Heart left ventricle (tissue), 16 donors: ENCODE measurements at regions of chr20 and their contacts with region 1.

Region 1: DNA sequence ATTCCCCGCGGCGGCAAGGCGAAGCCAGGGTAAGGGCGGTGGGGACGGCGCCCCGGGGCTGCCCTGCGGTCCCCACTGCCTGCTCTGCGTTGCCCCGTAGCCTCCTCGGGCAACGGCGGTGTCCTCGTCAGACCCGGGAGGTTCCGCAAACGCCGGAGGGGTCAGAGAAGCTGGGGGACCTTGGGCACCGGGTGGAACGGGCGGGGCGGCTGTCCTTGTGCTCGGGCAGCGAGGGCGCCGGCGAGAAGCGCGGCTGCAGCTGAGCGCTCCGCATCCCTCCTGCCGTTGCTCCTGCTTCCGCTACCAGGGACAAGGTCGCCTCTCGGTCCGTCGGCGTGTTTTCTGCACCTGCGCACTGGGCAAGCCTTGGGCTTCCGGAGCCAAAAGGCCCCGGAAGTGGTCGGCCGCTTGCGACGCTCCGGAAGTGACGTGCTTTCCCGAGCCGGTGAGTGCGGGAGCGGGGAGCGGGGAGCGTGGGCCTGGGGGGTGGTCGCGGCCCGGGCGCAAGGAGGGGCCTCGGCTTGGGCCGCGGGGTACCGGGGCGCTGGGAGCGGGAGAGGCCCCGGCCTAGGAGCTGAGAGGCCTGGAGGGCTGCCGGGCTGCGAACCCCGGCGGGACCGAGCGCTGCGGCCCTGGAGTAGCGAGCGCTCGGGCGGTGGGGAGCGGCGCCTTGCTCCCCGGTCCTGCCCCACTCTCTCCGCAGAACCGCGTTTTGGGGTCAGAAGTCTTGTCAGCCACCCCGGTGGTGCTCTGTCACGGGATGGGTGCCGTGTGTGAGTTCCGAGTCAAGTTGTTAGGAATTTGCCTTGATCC is at the start of gene MTG2:
- DNase-seq: peak; percentile 95 to 98 (median 97)
- ATAC-seq: peak; percentile 94 to 98 (median 98)
- H3K4me3 ChIP-seq: peak within 1 kb of the TSS; percentile 77 to 99 (median 96)
- H3K27ac ChIP-seq: peak within 1 kb of the TSS; percentile 78 to 99 (median 93)
- H3K4me1 ChIP-seq: peaks cover 8 to 35% (median 27%) of the 10 kb centered on the region in 12 donors
- H3K27me3 ChIP-seq: no peaks in the 10 kb centered on the region
- CTCF ChIP-seq: peak in 3 of 12 donors; percentile 4 to 14 (median 7)
- POLR2A ChIP-seq: peak in 1 of 2 donors; percentile 93
- total RNA-seq, gene MTG2: 20.7 to 36.8 (median 26.5) TPM

Region 2: GRCh38 chr20:62149532-62150309 is 33.1 kb before region 1 on chr20:
- intact Hi-C with region 1: loop called in 1 of 10 experiments (anchors 5 kb)
- DNase-seq: no peak
- ATAC-seq: peak in 1 of 4 donors; percentile 19
- H3K4me3 ChIP-seq: no peak overlapping the region
- H3K27ac ChIP-seq: peak overlapping the region in 1 of 12 donors; percentile 31
- H3K4me1 ChIP-seq: peaks cover 0 to 41% (median 21%) of the 10 kb centered on the region in 12 donors
- H3K27me3 ChIP-seq: no peaks in the 10 kb centered on the region
- CTCF ChIP-seq: no peak
- POLR2A ChIP-seq: no peak

Region 3: DNA sequence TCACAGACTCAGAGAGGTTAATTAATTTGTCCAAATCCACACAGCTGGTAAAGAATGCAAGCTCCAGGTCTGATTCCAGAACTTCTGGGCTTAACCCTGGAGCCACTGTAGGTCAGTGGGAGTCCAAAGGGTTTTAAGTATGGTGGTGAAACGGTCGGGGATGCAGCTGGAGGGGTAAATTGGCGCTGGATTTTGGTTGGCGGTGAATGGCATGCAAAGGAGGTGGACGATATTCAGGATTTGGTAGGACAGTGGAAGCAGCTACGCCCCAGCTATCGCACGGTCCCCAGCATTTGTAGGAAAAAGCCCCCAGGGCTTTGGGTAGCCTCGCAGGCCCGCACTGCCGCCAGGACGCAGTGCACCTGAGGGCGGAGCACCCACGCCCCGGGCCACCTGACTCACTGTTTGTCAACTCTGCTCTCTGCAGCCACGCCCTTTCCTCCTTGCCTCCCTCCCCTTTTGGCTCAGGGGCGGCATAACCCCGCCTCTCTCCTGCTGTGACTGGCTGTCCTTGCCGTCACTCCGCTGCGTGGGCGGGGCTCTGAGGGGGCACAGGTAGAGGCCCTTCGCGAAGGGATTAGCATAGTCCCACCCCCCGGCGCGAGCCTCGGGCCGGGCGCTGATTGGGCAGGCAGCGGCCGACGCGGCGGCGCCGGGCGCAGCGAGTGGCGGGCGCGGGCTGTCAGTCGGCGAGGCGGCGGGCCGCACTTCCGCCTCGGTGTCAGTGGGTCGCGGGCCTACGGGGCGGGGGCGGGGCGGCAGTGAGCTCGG is 55.2 kb after region 1 on chr20 and contains the start of gene OSBPL2:
- intact Hi-C with region 1: loop called in 4 of 10 experiments (anchors 5 to 10 kb)
- DNase-seq: peak; percentile 97 to 100 (median 99)
- ATAC-seq: peak; percentile 97 to 98 (median 98)
- H3K4me3 ChIP-seq: peak within 1 kb of the TSS; percentile 63 to 96 (median 79)
- H3K27ac ChIP-seq: peak within 1 kb of the TSS; percentile 47 to 97 (median 86)
- H3K4me1 ChIP-seq: peaks cover 6 to 82% (median 45%) of the 10 kb centered on the region in 12 donors
- H3K27me3 ChIP-seq: no peaks in the 10 kb centered on the region
- CTCF ChIP-seq: no peak
- POLR2A ChIP-seq: peak; percentile 31 to 46
- total RNA-seq, gene OSBPL2: 20.7 to 57.9 (median 40.3) TPM

Region 4: GRCh38 chr20:62285722-62286121 is 102.9 kb after region 1 on chr20:
- intact Hi-C with region 1: loop called in 1 of 10 experiments (anchors 10 kb)
- DNase-seq: peak in 4 of 5 donors; percentile 46 to 76 (median 66)
- ATAC-seq: peak in 3 of 4 donors; percentile 16 to 77 (median 35)
- H3K4me3 ChIP-seq: no peak overlapping the region
- H3K27ac ChIP-seq: peak overlapping the region in 11 of 12 donors; percentile 50 to 85 (median 79)
- H3K4me1 ChIP-seq: peaks cover 0 to 48% (median 33%) of the 10 kb centered on the region in 12 donors
- H3K27me3 ChIP-seq: no peaks in the 10 kb centered on the region
- CTCF ChIP-seq: no peak
- POLR2A ChIP-seq: no peak